ENCODE measurements at regions of chr1 and their contacts with region 1.

Region 1: DNA sequence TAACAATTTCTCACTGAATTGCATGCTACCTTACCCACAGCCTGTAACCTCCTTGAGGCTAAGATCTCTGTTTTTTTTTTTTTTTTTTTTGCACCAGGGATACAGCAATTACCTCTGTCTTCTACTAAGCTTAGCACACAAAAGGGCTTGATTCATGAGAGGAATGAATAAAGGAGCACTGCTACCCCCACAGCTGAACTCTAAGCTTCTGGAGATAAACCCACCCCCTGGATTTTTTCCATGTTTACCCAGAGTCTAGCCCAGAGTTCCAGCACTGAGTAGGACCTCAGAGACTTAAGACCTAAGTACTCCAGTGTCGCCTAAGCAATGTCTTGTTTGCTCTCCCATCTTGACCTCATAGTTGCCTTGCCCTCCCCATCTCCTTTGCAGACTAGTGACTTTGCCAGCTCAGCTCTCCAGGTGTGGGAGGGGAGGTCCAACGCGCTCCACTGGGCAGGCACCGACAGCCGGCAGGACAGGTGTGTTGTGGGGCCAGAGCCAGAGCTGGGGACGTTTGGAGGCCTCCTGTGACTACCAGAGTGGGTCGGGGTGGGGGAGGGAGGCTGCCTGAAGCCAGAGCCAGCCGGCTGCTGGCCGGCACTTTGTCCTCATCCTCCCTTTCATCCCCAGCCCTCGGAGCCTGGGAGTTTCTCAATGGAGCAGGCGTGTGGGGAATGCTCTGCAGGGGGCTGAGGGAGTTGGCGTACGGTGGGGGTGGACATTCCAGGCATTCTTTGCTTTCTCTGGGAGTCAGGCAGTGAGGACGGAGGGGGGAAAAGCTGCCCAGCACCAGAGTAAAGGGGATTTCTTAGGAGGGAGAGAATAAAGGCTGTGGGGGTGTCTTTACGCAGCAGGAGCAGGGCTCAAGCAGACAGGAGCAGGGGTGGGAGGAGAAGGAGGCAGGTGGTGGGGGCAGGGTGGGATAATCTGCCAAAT is 20.4 kb downstream of the NUAK2 start:
- DNase-seq: no peak
- H3K4me3 ChIP-seq: no peak overlapping the region
- H3K27ac ChIP-seq: no peak overlapping the region
- H3K4me1 ChIP-seq: peaks cover 0 to 2% (median 0%) of the 10 kb centered on the region in 4 experiments
- H3K27me3 ChIP-seq: peaks cover 0 to 3% (median 0%) of the 10 kb centered on the region in 5 experiments

Region 2: GRCh38 chr1:205273551-205273982 is 27.6 kb before region 1 on chr1:
- CTCF ChIA-PET with region 1: interaction called, 14 read pairs
- POLR2A ChIA-PET with region 1: no interaction called
- DNase-seq: peak; percentile 71 to 86 (median 81)
- H3K4me3 ChIP-seq: no peak overlapping the region
- H3K27ac ChIP-seq: no peak overlapping the region
- H3K4me1 ChIP-seq: peaks cover 0 to 6% (median under 1%) of the 10 kb centered on the region in 4 experiments
- H3K27me3 ChIP-seq: peaks cover 0 to 11% (median 0%) of the 10 kb centered on the region in 5 experiments

Region 3: DNA sequence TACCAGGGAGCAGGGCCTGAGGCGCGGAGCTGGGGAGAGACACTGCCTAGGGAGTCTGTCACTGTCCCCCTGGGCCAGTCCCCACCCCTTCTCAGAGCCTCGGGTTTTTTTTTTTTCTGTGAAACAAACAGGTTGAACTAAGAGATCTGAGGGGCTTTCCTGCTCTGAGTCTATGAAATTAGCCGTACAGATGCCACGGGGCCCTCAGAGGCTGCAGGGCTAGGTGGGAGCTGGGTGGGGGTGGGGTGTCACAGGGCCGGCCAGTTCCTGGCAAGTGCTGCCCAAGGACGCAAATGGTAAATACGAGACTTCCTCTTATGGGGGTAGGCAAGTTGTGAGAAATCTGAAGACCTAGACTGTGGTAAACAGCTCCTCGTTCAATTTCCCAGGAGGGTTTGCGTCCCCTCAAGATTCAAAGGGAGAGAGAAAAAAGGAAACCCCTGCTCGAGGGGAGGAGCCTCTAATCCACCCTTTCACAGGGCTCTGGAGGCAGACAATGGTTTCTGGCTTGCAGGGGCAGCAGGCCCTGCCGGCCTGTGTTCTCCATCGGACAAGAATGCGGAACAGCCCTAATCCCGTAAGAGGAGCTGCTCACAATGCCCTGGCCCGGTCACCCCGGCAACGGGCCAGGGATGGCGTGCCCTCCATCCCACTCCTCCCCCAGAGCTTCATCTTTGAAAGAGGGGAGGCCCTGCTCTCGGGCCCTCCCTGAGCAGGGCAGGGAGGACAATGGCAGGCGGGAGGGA is 12.6 kb after region 1 on chr1:
- CTCF ChIA-PET with region 1: interaction called, 12 read pairs
- POLR2A ChIA-PET with region 1: interaction called, 3 read pairs
- DNase-seq: peak; percentile 62 to 90 (median 87)
- H3K4me3 ChIP-seq: peak overlapping the region in 4 of 7 experiments; percentile 11 to 64 (median 58)
- H3K27ac ChIP-seq: peak overlapping the region; percentile 52 to 73
- H3K4me1 ChIP-seq: peaks cover 12 to 55% (median 32%) of the 10 kb centered on the region in 4 experiments
- H3K27me3 ChIP-seq: peaks cover 0 to 2% (median 0%) of the 10 kb centered on the region in 5 experiments

Region 4: GRCh38 chr1:205321164-205321958 is 20.2 kb after region 1 on chr1 and contains the start of gene NUAK2:
- CTCF ChIA-PET with region 1: interaction called, 12 read pairs
- POLR2A ChIA-PET with region 1: no interaction called
- DNase-seq: peak; percentile 56 to 76 (median 62)
- H3K4me3 ChIP-seq: peak within 1 kb of the TSS; percentile 10 to 92 (median 81)
- H3K27ac ChIP-seq: peak within 1 kb of the TSS in 1 of 2 experiments; percentile 40
- H3K4me1 ChIP-seq: peaks cover 16 to 55% (median 37%) of the 10 kb centered on the region in 4 experiments
- H3K27me3 ChIP-seq: peaks cover 0 to 37% (median 0%) of the 10 kb centered on the region in 5 experiments